ENCODE measurements at regions of chr19 and their contacts with region 1.

Region 1: DNA sequence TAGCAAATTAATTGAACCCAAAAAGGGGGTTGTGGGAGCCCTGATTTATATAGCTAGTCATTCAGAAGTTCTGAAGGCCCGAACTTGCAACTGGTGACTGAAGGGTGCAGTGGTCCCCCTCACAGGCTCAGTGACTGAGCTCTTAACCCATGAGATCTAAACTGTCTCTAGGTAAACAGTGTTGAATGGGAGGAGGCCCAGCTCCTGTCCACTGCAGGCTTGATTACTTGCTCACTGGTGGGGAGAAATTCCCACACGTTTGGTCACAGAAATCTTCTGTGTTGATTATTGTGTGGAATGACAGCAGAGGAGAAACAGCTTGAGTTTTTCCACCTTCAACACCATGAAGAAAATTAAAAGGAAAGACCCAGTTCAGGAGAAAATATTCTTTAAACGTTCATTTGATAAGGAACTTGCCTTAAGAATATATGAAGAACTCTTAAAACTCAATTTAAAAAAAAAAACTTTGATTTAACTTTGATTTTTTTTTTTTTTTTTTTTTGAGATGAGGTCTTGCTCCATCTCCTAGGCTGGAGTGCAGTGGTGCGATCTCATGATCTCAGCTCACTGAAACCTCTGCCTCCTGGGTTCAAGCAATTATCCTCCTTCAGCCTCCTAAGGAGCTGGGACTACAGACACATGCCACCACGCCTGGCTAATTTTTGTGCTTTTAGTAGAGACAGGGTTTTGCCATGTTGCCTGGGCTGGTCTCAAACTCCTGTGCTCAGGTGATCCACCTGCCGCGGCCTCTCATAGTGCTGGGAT is 249.3 kb downstream of the UQCRFS1 start:
- DNase-seq: no peak
- H3K4me3 ChIP-seq: no peak overlapping the region
- H3K27ac ChIP-seq: no peak overlapping the region
- H3K4me1 ChIP-seq: no peaks in the 10 kb centered on the region
- CTCF ChIP-seq: no peak

Region 2: DNA sequence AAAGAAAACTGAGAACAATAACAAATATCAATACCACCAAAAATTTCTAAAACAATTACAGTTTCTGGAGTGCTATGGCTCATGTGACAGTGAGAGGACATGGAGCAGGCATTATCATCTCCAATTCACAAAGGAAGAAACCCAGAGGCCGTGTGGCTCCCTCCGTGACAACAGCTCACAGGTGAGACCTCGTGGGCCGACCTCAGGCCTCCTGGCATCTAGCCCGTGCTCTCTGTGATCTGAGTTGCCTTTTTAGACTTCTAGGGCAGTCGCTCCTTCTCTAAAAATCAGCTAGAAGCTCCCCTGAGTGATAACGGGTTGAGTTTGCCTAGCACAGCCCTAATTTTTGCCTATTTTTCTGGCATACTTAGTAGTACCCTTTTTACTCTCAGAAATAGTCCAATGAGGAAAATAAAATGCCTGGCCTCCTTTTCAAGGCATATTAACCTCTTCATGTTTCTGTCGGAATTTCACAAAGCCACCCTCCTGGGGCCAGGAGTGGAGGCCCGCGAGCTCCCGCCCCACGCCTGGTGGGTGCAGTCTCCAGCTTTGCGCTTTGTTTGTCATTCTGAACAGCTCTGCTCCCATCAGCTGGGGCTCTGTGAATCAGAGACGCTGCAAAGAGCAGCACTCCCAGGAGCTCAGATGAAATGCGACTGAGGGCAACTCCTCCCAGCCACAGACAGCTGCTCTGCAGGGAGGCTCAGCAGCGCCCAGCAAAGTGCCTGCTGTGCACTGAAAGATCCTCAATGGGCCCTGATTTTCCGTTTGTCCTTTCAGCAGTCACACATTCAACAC is 43.2 kb before region 1 on chr19:
- CTCF ChIA-PET with region 1: no interaction called
- POLR2A ChIA-PET with region 1: no interaction called
- intact Hi-C with region 1: no loop called
- DNase-seq: no peak
- H3K4me3 ChIP-seq: no peak overlapping the region
- H3K27ac ChIP-seq: no peak overlapping the region
- H3K4me1 ChIP-seq: no peaks in the 10 kb centered on the region
- CTCF ChIP-seq: no peak

Region 3: DNA sequence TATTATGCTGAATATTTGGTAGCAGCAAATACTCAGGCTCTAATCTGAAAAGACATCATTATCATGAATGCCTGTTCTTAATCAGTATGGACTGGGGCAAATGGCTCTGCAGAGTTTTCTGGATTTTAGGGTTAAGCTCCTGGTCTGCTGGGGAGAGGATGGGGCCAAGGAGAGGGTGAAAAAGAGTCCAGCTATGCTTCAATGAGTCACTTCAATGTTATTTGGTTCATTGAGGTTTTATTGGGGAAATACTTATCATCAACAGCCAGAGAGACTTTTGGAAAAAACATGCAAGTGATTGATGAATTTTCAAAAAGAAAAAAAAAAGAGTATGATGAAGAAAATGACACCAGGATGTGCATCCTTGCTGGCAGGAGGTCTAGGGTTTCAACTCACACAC is 29.0 kb before region 1 on chr19:
- CTCF ChIA-PET with region 1: no interaction called
- POLR2A ChIA-PET with region 1: interaction called, 10 read pairs
- intact Hi-C with region 1: no loop called
- DNase-seq: no peak
- H3K4me3 ChIP-seq: no peak overlapping the region
- H3K27ac ChIP-seq: no peak overlapping the region
- H3K4me1 ChIP-seq: no peaks in the 10 kb centered on the region
- CTCF ChIP-seq: no peak